Activated T-helper 2 cell treated with anti-CD3 and anti-CD28 coated beads, Interferon-gamma antibody, Interleukin-2, Interleukin-4, amounts not matched to agents 10 μg/mL and 5 μg/mL and 100 μg/mL, durations not matched to agents 14 hours and 24 hours and 36 hours (primary cell): ENCODE measurements at regions of chr11 and their contacts with region 1.

Region 1: DNA sequence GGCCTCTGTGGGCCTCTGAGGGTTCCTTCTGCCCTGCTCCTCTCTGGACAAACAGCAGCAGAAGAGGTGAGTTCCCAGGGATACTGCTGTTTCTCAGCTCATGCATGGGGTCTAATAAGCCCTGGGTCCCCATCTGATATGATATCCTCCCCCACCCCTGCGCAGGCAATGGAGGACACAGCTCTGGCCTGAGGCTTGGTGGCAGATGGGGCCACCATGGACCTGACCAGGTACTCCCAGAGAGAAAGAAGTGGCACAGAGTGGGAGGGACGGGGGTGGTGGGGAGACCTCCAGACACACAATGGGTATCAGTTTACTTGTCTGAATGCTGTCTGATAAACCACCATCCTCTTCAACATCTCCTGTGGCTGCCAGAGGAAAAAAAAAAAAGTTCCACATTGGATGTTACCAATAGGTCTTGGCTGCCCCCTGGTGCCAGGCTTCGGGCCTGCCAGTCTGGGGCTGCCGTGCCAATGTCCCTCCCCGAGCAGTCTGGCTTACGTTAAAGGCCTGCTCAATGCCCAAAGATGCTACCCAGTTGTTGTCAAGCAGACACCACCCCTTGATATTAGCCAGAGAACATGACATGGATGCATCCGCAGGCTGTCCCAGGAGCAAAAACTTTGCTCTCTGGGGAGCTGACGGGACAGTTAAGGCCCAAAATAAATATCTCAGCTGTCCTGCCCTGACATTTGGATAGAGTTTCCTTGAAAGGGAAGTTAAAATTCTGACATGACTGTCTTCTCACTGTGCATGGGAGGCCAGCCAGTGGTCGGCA is 27.9 kb upstream of the ABCC8 start:
- DNase-seq: peak; percentile 69
- H3K4me3 Mint-ChIP-seq: no peak overlapping the region
- H3K27ac Mint-ChIP-seq: no peak overlapping the region
- H3K4me1 Mint-ChIP-seq: no peaks in the 10 kb centered on the region
- H3K27me3 Mint-ChIP-seq: peaks cover 13% of the 10 kb centered on the region

Region 2: DNA sequence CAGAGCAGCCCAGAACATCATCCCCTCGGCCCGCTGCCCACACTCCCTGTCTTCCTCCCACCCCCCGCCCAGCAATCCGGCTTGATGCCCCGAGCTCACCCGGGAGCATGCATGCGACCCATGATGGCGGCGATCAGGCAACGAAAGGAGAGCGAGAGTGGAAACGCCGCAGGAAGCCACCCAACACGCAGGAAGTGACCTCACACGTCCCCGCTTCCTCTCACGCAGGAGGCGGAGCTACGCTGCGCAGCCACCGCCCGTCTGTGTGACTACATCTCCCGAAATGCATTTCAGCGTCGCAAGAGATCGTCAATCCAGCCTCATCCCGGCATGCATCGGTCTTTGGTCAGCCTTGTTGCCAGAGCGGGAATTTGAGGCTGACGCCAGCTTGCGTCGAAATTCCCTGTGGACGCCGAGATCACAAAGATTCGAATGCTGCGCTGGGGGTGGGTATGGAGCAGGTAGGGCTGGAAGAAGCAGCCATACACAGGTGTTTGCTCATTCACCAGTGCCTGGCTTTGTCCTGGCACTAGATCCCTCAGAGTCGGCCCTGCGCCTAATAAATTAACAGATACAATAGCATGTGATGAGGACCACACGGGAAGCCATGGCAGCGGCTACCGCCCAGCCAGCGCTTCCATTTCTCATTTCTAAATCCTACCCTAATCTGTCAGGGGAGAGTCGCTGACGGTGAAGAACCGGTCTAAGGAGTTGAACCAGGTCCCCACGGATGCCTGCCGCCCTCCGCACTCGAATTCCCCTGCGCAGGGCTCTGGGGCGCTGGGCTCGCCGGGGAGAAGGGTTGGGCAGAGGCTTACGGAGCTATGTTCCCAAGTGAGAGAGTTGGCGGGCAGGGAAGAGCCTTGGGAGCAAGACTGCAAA is 426.8 kb before region 1 on chr11 and contains the start of gene RPS13:
- intact Hi-C with region 1: loop called (anchors 10 kb)
- DNase-seq: peak; percentile 95
- H3K4me3 Mint-ChIP-seq: peak within 1 kb of the TSS; percentile 100
- H3K27ac Mint-ChIP-seq: peak within 1 kb of the TSS; percentile 97
- H3K4me1 Mint-ChIP-seq: peaks cover 36% of the 10 kb centered on the region
- H3K27me3 Mint-ChIP-seq: no peaks in the 10 kb centered on the region
- total RNA-seq, gene RPS13: 1,360 and 1,371 TPM in 2 replicates

Region 3: DNA sequence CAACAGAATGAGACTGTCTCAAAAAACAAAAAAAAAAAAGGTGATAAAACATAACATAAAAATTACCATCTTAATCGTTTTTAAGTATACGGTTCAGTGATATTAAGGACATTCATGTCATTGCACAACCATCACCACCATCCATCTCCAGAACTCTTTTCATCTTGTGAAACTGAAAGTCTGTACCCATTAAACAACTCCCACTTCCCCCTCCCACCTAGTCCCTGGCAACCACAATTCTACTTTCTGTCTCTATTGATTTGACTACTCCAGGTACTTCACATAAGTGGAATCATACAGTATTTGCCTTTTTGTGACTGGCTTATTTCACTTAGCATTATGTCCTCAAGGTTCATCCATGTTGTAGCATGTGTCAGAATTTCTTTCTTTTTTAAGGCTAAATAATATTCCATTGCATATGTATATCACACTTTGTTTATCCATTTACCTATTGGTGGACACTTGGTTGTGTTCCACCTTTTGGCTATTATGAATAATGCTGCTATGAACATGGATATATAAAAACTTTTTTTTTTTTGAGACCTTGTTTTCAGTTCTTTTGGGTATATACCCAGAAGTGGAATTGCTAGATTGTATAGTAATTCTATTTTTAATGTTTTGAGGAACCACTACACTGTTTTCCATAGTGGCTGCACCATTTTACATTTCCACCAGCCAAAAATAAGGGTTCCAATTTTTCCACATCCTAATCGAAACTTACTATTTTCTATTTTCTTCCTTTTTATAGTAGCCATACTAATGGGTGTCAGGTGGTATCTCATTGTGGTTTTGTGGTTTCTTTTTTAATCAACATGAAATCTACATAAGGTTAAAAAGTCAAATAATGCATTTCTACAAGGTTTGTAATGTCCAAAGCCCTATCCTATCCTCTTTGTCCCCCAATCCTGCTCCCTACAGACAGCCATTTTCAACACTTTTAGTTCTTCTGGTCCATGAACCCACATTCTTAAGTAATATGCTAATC is 273.4 kb before region 1 on chr11:
- intact Hi-C with region 1: loop called (anchors 1 kb)
- DNase-seq: peak; percentile 53
- H3K4me3 Mint-ChIP-seq: no peak overlapping the region
- H3K27ac Mint-ChIP-seq: peak overlapping the region; percentile 25
- H3K4me1 Mint-ChIP-seq: peaks cover 12% of the 10 kb centered on the region
- H3K27me3 Mint-ChIP-seq: peaks cover 29% of the 10 kb centered on the region

Region 4: GRCh38 chr11:17384002-17384511 is 120.5 kb before region 1 on chr11:
- intact Hi-C with region 1: loop called (anchors 1 kb)
- DNase-seq: peak; percentile 61
- H3K4me3 Mint-ChIP-seq: no peak overlapping the region
- H3K27ac Mint-ChIP-seq: no peak overlapping the region
- H3K4me1 Mint-ChIP-seq: no peaks in the 10 kb centered on the region
- H3K27me3 Mint-ChIP-seq: peaks cover 16% of the 10 kb centered on the region

Region 5: GRCh38 chr11:17439316-17439782 is 65.2 kb before region 1 on chr11:
- intact Hi-C with region 1: loop called (anchors 10 kb)
- DNase-seq: no peak
- H3K4me3 Mint-ChIP-seq: no peak overlapping the region
- H3K27ac Mint-ChIP-seq: no peak overlapping the region
- H3K4me1 Mint-ChIP-seq: peaks cover 23% of the 10 kb centered on the region
- H3K27me3 Mint-ChIP-seq: peaks cover 25% of the 10 kb centered on the region

Region 6: GRCh38 chr11:17714356-17714854 is 209.9 kb after region 1 on chr11:
- intact Hi-C with region 1: no loop called
- DNase-seq: no peak
- H3K4me3 Mint-ChIP-seq: no peak overlapping the region
- H3K27ac Mint-ChIP-seq: no peak overlapping the region
- H3K4me1 Mint-ChIP-seq: no peaks in the 10 kb centered on the region
- H3K27me3 Mint-ChIP-seq: peaks cover 18% of the 10 kb centered on the region